ENCODE measurements at regions of chr11 and their contacts with region 1.

Region 1: GRCh38 chr11:75814686-75815344 is at the start of gene UVRAG:
- DNase-seq: peak; percentile 97 to 99 (median 98)
- ATAC-seq: peak; percentile 88
- H3K4me3 ChIP-seq: peak within 1 kb of the TSS; percentile 65 to 93
- H3K4me3 Mint-ChIP-seq: no peak within 1 kb of the TSS
- H3K27ac ChIP-seq: peak within 1 kb of the TSS; percentile 77 to 88
- H3K27ac Mint-ChIP-seq: peak within 1 kb of the TSS; percentile 97
- H3K4me1 ChIP-seq: peaks cover 23% of the 10 kb centered on the region
- H3K4me1 Mint-ChIP-seq: peaks cover 21% of the 10 kb centered on the region
- H3K27me3 ChIP-seq: no peaks in the 10 kb centered on the region
- H3K27me3 Mint-ChIP-seq: no peaks in the 10 kb centered on the region
- CTCF ChIP-seq: no peak
- total RNA-seq, gene UVRAG: 14.3 to 15.1 TPM

Region 2: GRCh38 chr11:75582895-75583717 is 231.7 kb before region 1 on chr11:
- CTCF ChIA-PET with region 1: no interaction called
- POLR2A ChIA-PET with region 1: interaction called, 3 read pairs
- intact Hi-C with region 1: loop called in 1 of 2 experiments (anchors 5 kb)
- DNase-seq: peak in 8 of 9 experiments; percentile 7 to 81 (median 62)
- ATAC-seq: peak; percentile 95
- H3K4me3 ChIP-seq: peak overlapping the region; percentile 66 to 73
- H3K4me3 Mint-ChIP-seq: peak overlapping the region; percentile 87
- H3K27ac ChIP-seq: peak overlapping the region; percentile 53 to 68
- H3K27ac Mint-ChIP-seq: peak overlapping the region; percentile 84
- H3K4me1 ChIP-seq: peaks cover 9% of the 10 kb centered on the region
- H3K4me1 Mint-ChIP-seq: peaks cover 20% of the 10 kb centered on the region
- H3K27me3 ChIP-seq: no peaks in the 10 kb centered on the region
- H3K27me3 Mint-ChIP-seq: no peaks in the 10 kb centered on the region
- CTCF ChIP-seq: no peak

Region 3: DNA sequence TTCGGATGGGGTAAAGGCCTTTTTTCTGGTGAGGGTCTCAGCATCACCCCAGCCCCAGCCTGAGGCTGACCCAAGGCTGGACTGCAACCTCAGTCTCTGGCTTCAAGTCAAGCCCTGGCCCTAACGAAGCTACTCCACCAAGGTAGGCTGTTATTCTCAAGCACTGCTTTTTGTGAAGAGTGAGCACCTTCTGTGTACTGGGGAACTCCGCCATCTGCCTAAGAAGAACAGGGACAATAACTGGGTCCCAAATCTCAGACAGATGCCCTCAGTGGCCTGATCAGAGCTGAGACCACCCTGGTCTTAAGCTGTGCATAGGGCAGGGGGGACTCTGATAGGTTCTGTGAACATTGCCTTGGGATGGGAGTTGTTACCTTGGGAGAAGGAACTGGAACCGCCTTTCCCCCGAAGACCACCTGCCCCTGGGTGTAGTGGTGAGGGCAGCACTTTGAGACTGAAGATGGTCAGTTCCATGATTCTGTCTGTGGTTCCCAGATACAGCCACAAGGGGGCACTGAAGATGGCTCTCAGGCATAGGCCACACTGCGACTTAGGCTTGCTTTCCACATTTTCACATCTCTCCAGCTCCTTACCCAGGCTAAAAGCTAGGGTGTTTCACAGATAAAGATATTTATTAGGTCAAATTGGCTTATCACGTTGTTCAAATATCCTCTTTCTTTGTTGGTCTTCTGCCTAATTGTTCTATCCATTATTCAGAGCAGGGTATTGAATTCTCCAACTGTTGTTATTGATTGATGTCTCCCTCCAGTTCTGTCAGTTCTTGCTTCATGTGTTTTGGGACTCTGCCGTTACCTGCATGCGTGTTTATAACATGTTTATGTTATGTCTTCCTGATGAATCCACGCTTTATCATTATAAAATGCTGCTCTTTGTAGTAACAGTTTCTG is 11.6 kb before region 1 on chr11:
- CTCF ChIA-PET with region 1: interaction called, 46 read pairs
- POLR2A ChIA-PET with region 1: no interaction called
- intact Hi-C with region 1: loop called in 1 of 2 experiments (anchors 1 kb)
- DNase-seq: peak; percentile 51 to 80 (median 75)
- ATAC-seq: peak; percentile 98
- H3K4me3 ChIP-seq: no peak overlapping the region
- H3K4me3 Mint-ChIP-seq: no peak overlapping the region
- H3K27ac ChIP-seq: no peak overlapping the region
- H3K27ac Mint-ChIP-seq: no peak overlapping the region
- H3K4me1 ChIP-seq: no peaks in the 10 kb centered on the region
- H3K4me1 Mint-ChIP-seq: peaks cover 5% of the 10 kb centered on the region
- H3K27me3 ChIP-seq: no peaks in the 10 kb centered on the region
- H3K27me3 Mint-ChIP-seq: no peaks in the 10 kb centered on the region
- CTCF ChIP-seq: peak; percentile 91

Region 4: DNA sequence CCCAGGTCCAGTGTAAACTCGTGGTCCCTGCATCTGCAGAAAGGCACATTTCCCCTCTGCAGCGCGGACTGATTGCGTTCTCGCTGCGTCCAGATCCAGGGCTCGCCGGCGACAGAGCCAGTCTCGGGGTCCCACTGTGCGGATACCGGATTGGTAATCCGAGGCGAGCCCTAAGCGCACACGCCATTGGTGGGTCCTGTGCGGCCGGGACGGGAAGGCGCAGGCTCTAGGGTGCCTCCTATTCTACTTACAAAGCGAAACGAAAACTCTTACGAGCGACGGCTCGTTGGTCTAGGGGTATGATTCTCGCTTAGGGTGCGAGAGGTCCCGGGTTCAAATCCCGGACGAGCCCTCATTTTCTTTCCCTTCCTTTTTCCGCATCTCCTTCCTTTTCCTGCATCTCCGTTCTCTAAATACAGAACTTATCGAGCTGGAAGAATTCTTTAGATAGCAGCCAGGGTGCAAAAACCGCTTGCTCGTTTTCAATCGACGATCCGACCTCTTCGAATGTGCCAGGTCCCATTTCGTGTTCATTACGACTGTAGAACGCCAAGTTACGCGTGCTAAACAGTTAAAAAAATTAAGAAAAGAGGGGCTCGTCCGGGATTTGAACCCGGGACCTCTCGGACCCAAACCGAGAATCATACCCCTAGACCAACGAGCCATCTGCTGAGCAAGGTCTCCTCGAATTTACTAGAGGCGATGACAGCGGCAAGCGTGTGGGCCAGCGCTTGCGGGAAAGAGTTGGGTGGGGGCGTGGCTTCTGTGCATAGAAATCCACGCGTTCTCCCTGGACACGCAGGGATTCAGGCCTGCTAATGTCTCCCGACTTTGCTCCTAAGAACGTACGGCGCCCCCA is 420.6 kb after region 1 on chr11:
- CTCF ChIA-PET with region 1: no interaction called
- POLR2A ChIA-PET with region 1: interaction called, 3 read pairs
- intact Hi-C with region 1: loop called (anchors 2 to 10 kb)
- DNase-seq: peak; percentile 84 to 96 (median 89)
- ATAC-seq: peak; percentile 84
- H3K4me3 ChIP-seq: peak overlapping the region; percentile 86 to 99
- H3K4me3 Mint-ChIP-seq: peak overlapping the region; percentile 90
- H3K27ac ChIP-seq: peak overlapping the region; percentile 61 to 63
- H3K27ac Mint-ChIP-seq: peak overlapping the region; percentile 89
- H3K4me1 ChIP-seq: peaks cover 47% of the 10 kb centered on the region
- H3K4me1 Mint-ChIP-seq: peaks cover 39% of the 10 kb centered on the region
- H3K27me3 ChIP-seq: no peaks in the 10 kb centered on the region
- H3K27me3 Mint-ChIP-seq: no peaks in the 10 kb centered on the region
- CTCF ChIP-seq: no peak

Region 5: DNA sequence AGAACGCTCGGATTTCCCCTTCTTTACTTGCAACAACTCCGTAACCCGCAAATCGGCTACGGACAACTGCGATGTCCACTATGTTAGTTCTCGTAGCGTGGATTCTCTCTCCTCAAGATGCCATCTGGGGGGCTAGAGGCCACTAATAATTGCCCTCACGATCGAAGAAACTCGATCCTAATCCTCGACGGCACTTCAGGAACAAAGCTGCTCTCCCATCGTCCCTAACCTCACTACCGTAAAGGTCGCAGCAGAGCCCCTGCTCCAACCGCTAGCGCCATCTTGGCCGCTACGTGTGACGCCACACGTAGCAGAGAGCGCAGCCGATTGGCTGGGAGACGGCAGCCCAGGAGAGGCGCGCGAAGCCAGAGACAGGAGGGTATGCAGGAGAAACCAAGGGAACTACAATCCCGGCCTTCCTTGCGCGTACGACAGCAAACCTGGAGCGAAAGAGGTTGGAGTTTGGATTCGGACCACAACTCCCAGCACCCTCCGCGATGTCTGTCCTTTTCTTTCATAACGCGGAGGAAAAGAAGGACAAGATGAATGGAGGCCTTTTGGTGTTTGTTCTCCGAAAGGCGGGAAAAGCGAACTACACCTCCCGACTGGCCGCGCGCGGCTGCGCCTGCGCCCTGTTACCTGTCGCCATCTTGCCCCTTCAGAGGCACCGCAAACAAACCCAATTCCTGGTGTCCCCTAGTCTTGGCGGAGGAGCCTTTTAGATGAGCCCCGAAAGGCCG is 629.7 kb after region 1 on chr11 and contains the start of gene EMSY:
- CTCF ChIA-PET with region 1: no interaction called
- POLR2A ChIA-PET with region 1: no interaction called
- intact Hi-C with region 1: loop called (anchors 1 to 2 kb)
- DNase-seq: peak; percentile 77 to 97 (median 90)
- ATAC-seq: peak; percentile 91
- H3K4me3 ChIP-seq: peak within 1 kb of the TSS; percentile 58 to 100
- H3K4me3 Mint-ChIP-seq: peak within 1 kb of the TSS; percentile 94
- H3K27ac ChIP-seq: peak within 1 kb of the TSS; percentile 70 to 97
- H3K27ac Mint-ChIP-seq: peak within 1 kb of the TSS; percentile 96
- H3K4me1 ChIP-seq: peaks cover 20% of the 10 kb centered on the region
- H3K4me1 Mint-ChIP-seq: peaks cover 38% of the 10 kb centered on the region
- H3K27me3 ChIP-seq: no peaks in the 10 kb centered on the region
- H3K27me3 Mint-ChIP-seq: no peaks in the 10 kb centered on the region
- CTCF ChIP-seq: no peak
- total RNA-seq, gene EMSY: 19.8 to 20.7 TPM

Region 6: GRCh38 chr11:77473801-77474683 is 1659.2 kb after region 1 on chr11 and contains the start of gene PAK1:
- CTCF ChIA-PET with region 1: no interaction called
- POLR2A ChIA-PET with region 1: no interaction called
- intact Hi-C with region 1: loop called in 1 of 2 experiments (anchors 5 kb)
- DNase-seq: peak; percentile 63 to 99 (median 87)
- ATAC-seq: peak; percentile 73
- H3K4me3 ChIP-seq: peak within 1 kb of the TSS; percentile 56 to 58
- H3K4me3 Mint-ChIP-seq: peak within 1 kb of the TSS; percentile 88
- H3K27ac ChIP-seq: peak within 1 kb of the TSS; percentile 49 to 69
- H3K27ac Mint-ChIP-seq: peak within 1 kb of the TSS; percentile 97
- H3K4me1 ChIP-seq: peaks cover 11% of the 10 kb centered on the region
- H3K4me1 Mint-ChIP-seq: peaks cover 30% of the 10 kb centered on the region
- H3K27me3 ChIP-seq: no peaks in the 10 kb centered on the region
- H3K27me3 Mint-ChIP-seq: peaks cover 4% of the 10 kb centered on the region
- CTCF ChIP-seq: no peak
- total RNA-seq, gene PAK1: 16.9 to 18.7 TPM

Measured in CD8-positive, alpha-beta T cell (primary cell).